CD4-positive, alpha-beta memory T cell (primary cell): ENCODE measurements at regions of chr14 and their contacts with region 1.

Region 1: GRCh38 chr14:22570132-22570949 is 18.7 kb downstream of the DAD1 start:
- DNase-seq: peak; percentile 94 to 97 (median 96)
- H3K4me3 ChIP-seq: peak overlapping the region; percentile 6 to 41
- H3K4me3 Mint-ChIP-seq: peak overlapping the region; percentile 54 to 85 (median 80)
- H3K27ac ChIP-seq: peak overlapping the region; percentile 69
- H3K27ac Mint-ChIP-seq: peak overlapping the region; percentile 95 to 100 (median 98)
- H3K4me1 ChIP-seq: peaks cover 52% of the 10 kb centered on the region
- H3K4me1 Mint-ChIP-seq: peaks cover 38 to 57% (median 46%) of the 10 kb centered on the region in 4 donors
- H3K27me3 ChIP-seq: no peaks in the 10 kb centered on the region
- H3K27me3 Mint-ChIP-seq: no peaks in the 10 kb centered on the region

Region 2: GRCh38 chr14:21882226-21882625 is 688.1 kb before region 1 on chr14:
- CTCF ChIA-PET with region 1: interaction called, 10 read pairs
- POLR2A ChIA-PET with region 1: interaction called, 7 read pairs
- intact Hi-C with region 1: no loop called
- DNase-seq: no peak
- H3K4me3 ChIP-seq: no peak overlapping the region
- H3K4me3 Mint-ChIP-seq: peak overlapping the region in 1 of 8 donors; percentile 43
- H3K27ac ChIP-seq: no peak overlapping the region
- H3K27ac Mint-ChIP-seq: no peak overlapping the region
- H3K4me1 ChIP-seq: peaks cover 2% of the 10 kb centered on the region
- H3K4me1 Mint-ChIP-seq: peaks cover 4 to 22% (median 8%) of the 10 kb centered on the region in 4 donors
- H3K27me3 ChIP-seq: no peaks in the 10 kb centered on the region
- H3K27me3 Mint-ChIP-seq: no peaks in the 10 kb centered on the region

Region 3: DNA sequence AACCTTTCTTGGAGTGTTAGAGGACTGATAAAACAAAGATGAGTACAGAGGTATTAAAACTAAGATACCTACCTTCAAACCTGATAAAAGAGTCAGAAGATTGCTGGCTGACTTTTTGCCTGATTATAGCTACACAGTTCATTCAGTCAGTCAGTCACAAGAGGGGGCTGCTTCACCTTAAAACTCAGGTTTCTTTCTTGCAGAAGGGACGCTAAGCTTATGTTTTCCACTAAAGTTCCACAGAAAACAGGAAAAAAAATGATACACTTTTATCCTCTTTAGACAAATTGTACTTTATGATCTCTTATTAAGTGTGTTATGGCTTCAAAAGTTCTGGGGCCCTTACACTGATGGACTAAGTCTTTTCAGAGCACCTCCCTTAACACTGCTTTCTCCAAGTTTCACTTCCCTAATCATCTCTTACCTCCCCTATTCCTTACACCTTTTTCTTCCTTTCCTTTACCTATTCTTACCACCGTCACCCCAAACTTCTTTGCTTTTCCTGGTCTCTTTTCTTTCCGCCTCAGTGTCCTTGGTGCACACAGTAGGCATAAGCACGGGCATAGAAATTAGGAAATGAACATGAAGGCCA is 448.0 kb before region 1 on chr14:
- CTCF ChIA-PET with region 1: interaction called, 19 read pairs
- POLR2A ChIA-PET with region 1: interaction called, 13 read pairs
- intact Hi-C with region 1: loop called (anchors 5 kb)
- DNase-seq: peak in 1 of 5 donors; percentile 32
- H3K4me3 ChIP-seq: no peak overlapping the region
- H3K4me3 Mint-ChIP-seq: peak overlapping the region; percentile 70 to 86 (median 78)
- H3K27ac ChIP-seq: peak overlapping the region; percentile 46
- H3K27ac Mint-ChIP-seq: peak overlapping the region; percentile 82 to 95 (median 88)
- H3K4me1 ChIP-seq: peaks cover 4% of the 10 kb centered on the region
- H3K4me1 Mint-ChIP-seq: peaks cover 2 to 12% (median 6%) of the 10 kb centered on the region in 4 donors
- H3K27me3 ChIP-seq: no peaks in the 10 kb centered on the region
- H3K27me3 Mint-ChIP-seq: no peaks in the 10 kb centered on the region

Region 4: DNA sequence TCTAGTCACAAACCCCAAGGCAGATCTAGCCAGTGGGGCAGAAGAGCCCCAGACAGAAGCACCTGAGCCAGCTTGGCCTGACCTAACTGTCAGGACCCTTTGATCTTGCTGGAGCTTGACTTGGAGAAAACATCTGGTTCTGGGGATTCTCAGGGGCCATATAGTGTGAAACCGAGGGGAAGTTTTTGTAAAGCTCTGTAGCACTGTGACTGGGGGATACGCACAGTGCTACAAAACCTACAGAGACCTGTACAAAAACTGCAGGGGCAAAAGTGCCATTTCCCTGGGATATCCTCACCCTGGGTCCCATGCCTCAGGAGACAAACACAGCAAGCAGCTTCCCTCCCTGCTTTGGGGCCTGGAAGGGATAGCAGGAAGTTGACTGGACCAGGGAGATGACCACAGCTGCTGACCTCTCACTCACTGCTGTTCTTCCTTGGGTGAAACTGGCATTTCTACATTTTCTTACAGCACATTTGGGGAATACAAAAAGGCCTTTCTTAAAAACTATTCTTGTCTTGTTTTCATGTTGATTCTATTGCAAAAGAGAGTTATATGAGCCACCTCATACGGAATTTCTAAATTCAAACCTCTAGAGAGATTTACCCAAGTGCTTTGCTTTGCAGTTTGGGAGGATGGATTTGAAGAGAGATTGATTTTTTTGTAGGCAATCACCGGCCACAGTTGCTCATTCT is 121.3 kb before region 1 on chr14:
- CTCF ChIA-PET with region 1: no interaction called
- POLR2A ChIA-PET with region 1: no interaction called
- intact Hi-C with region 1: no loop called
- DNase-seq: no peak
- H3K4me3 ChIP-seq: no peak overlapping the region
- H3K4me3 Mint-ChIP-seq: no peak overlapping the region
- H3K27ac ChIP-seq: no peak overlapping the region
- H3K27ac Mint-ChIP-seq: no peak overlapping the region
- H3K4me1 ChIP-seq: no peaks in the 10 kb centered on the region
- H3K4me1 Mint-ChIP-seq: no peaks in the 10 kb centered on the region
- H3K27me3 ChIP-seq: no peaks in the 10 kb centered on the region
- H3K27me3 Mint-ChIP-seq: no peaks in the 10 kb centered on the region

Region 5: GRCh38 chr14:22519877-22520685 is 50.3 kb before region 1 on chr14:
- CTCF ChIA-PET with region 1: interaction called, 16 read pairs
- POLR2A ChIA-PET with region 1: interaction called, 186 read pairs
- intact Hi-C with region 1: no loop called
- DNase-seq: no peak
- H3K4me3 ChIP-seq: peak overlapping the region; percentile 2 to 39
- H3K4me3 Mint-ChIP-seq: peak overlapping the region; percentile 83 to 91 (median 90)
- H3K27ac ChIP-seq: peak overlapping the region; percentile 76
- H3K27ac Mint-ChIP-seq: peak overlapping the region; percentile 95 to 100 (median 95)
- H3K4me1 ChIP-seq: peaks cover 98% of the 10 kb centered on the region
- H3K4me1 Mint-ChIP-seq: peaks cover 70 to 98% (median 84%) of the 10 kb centered on the region in 4 donors
- H3K27me3 ChIP-seq: no peaks in the 10 kb centered on the region
- H3K27me3 Mint-ChIP-seq: no peaks in the 10 kb centered on the region

Region 6: GRCh38 chr14:22646570-22647254 is 76.4 kb after region 1 on chr14:
- CTCF ChIA-PET with region 1: interaction called, 76 read pairs
- POLR2A ChIA-PET with region 1: interaction called, 6 read pairs
- intact Hi-C with region 1: no loop called
- DNase-seq: no peak
- H3K4me3 ChIP-seq: no peak overlapping the region
- H3K4me3 Mint-ChIP-seq: no peak overlapping the region
- H3K27ac ChIP-seq: no peak overlapping the region
- H3K27ac Mint-ChIP-seq: no peak overlapping the region
- H3K4me1 ChIP-seq: no peaks in the 10 kb centered on the region
- H3K4me1 Mint-ChIP-seq: peaks cover 4 to 8% (median 6%) of the 10 kb centered on the region in 4 donors
- H3K27me3 ChIP-seq: no peaks in the 10 kb centered on the region
- H3K27me3 Mint-ChIP-seq: no peaks in the 10 kb centered on the region

Region 7: GRCh38 chr14:22852940-22853767 is 282.8 kb after region 1 on chr14:
- CTCF ChIA-PET with region 1: interaction called, 122 read pairs
- POLR2A ChIA-PET with region 1: interaction called, 20 read pairs
- intact Hi-C with region 1: loop called (anchors 1 kb)
- DNase-seq: peak; percentile 81 to 86 (median 83)
- H3K4me3 ChIP-seq: peak overlapping the region; percentile 72 to 77
- H3K4me3 Mint-ChIP-seq: peak overlapping the region; percentile 84 to 89 (median 86)
- H3K27ac ChIP-seq: peak overlapping the region; percentile 34
- H3K27ac Mint-ChIP-seq: peak overlapping the region; percentile 52 to 83 (median 75)
- H3K4me1 ChIP-seq: peaks cover 13% of the 10 kb centered on the region
- H3K4me1 Mint-ChIP-seq: peaks cover 6 to 20% (median 13%) of the 10 kb centered on the region in 4 donors
- H3K27me3 ChIP-seq: no peaks in the 10 kb centered on the region
- H3K27me3 Mint-ChIP-seq: peaks cover 5 to 9% of the 10 kb centered on the region in 2 donors

Region 8: GRCh38 chr14:23006544-23007419 is 436.4 kb after region 1 on chr14:
- CTCF ChIA-PET with region 1: no interaction called
- POLR2A ChIA-PET with region 1: interaction called, 10 read pairs
- intact Hi-C with region 1: no loop called
- DNase-seq: peak; percentile 99
- H3K4me3 ChIP-seq: peak overlapping the region; percentile 96
- H3K4me3 Mint-ChIP-seq: peak overlapping the region; percentile 94 to 99 (median 97)
- H3K27ac ChIP-seq: peak overlapping the region; percentile 80
- H3K27ac Mint-ChIP-seq: peak overlapping the region; percentile 90 to 99 (median 97)
- H3K4me1 ChIP-seq: peaks cover 37% of the 10 kb centered on the region
- H3K4me1 Mint-ChIP-seq: peaks cover 17 to 52% (median 34%) of the 10 kb centered on the region in 4 donors
- H3K27me3 ChIP-seq: no peaks in the 10 kb centered on the region
- H3K27me3 Mint-ChIP-seq: no peaks in the 10 kb centered on the region